Right lobe of liver (tissue), 6 donors: ENCODE measurements at regions of chr9 and their contacts with region 1.

Region 1: DNA sequence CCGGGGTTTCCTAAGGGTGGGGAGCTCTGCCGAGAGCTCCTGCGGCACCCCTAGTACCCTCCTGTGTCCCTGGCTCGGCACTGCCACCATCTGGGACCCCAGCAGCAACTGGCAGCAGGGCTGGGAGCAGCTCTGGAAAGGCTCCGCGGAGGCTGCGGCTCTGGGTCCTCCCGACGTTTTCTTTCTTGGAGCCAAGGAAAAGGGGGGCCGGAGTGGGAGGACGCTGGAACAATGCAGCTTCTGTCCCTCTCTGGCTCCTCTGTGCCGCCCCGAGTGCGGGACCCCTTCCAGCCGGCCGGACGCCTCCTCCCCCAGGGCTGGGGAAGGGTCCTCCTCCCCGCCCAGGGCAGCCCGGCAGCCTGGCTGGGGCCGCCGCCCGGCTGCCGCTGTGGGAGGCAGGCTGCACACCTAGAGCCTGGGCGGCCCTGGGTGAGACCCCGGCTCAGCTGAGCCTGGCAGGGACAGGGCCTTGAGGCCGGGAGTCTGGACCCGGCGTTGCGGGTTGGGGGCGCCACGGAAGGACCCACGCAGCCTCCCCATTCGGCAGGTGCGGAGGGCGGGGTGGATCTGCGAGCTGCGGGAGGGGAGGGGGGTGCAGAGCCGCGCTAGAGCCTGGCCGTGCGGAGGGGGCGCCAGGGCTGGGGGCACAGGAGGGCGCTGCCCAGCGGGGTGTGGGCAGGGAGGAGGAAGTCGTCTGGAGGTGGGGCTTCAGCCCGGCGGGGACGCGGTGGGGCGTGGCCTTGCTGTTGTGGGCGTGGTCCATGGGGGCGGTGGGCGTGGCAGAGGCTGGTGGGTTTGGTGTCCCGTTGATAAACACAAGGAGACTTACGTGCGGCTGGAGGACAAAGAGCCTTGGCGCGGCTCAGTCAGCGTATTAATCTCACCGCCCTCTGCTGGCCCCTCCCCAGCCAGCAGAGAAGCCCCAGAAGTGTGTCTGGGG is 15.1 kb downstream of the GPSM1 start:
- DNase-seq: peak; percentile 78 to 91 (median 80)
- ATAC-seq: peak; percentile 55 to 64 (median 60)
- H3K4me3 ChIP-seq: peak overlapping the region in 1 of 3 donors; percentile 29
- H3K27ac ChIP-seq: no peak overlapping the region
- H3K4me1 ChIP-seq: no peaks in the 10 kb centered on the region
- H3K27me3 ChIP-seq: no peaks in the 10 kb centered on the region
- CTCF ChIP-seq: no peak
- POLR2A ChIP-seq: no peak

Region 2: DNA sequence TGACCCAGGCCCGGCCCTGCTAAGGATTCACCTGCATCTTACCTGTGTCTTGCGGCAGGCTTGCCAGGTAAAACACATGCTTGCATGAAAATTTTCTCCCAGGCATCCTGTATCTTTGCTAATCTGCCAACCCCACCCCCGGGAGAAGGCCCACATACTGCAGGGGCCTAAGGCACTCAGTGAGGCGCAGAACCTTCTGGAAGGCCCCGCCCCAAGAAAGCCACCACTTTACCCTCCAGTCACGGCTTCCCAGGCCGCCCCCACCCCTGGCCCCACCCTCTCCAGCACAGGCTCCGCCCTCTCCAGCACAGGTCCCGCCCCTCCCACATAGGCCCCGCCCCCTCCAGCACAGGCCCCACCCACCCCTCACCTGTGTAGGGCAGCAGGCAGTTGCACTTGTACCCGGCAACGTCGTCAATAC is 170.2 kb after region 1 on chr9:
- intact Hi-C with region 1: no loop called
- DNase-seq: no peak
- ATAC-seq: peak; percentile 3 to 24 (median 14)
- H3K4me3 ChIP-seq: no peak overlapping the region
- H3K27ac ChIP-seq: peak overlapping the region; percentile 27 to 79 (median 47)
- H3K4me1 ChIP-seq: no peaks in the 10 kb centered on the region
- H3K27me3 ChIP-seq: no peaks in the 10 kb centered on the region
- CTCF ChIP-seq: no peak
- POLR2A ChIP-seq: no peak

Region 3: GRCh38 chr9:136644598-136645351 is 302.3 kb after region 1 on chr9:
- intact Hi-C with region 1: loop called in 1 of 2 experiments (anchors 10 kb)
- DNase-seq: peak; percentile 74 to 86 (median 82)
- ATAC-seq: peak; percentile 69 to 82 (median 82)
- H3K4me3 ChIP-seq: peak overlapping the region in 2 of 3 donors; percentile 31 to 38
- H3K27ac ChIP-seq: peak overlapping the region; percentile 40 to 87 (median 60)
- H3K4me1 ChIP-seq: peaks cover 0 to 11% (median 4%) of the 10 kb centered on the region in 4 donors
- H3K27me3 ChIP-seq: no peaks in the 10 kb centered on the region
- CTCF ChIP-seq: peak; percentile 78 to 83 (median 82)
- POLR2A ChIP-seq: no peak